H1 (cell line): ENCODE measurements at regions of chr1 and their contacts with region 1.

Region 1: GRCh38 chr1:115463363-115463746 is 125.3 kb upstream of the NGF start:
- DNase-seq: peak in 1 of 2 experiments; percentile 20
- H3K4me3 ChIP-seq: no peak overlapping the region
- H3K27ac ChIP-seq: no peak overlapping the region
- H3K4me1 ChIP-seq: no peaks in the 10 kb centered on the region
- H3K27me3 ChIP-seq: no peaks in the 10 kb centered on the region
- CTCF ChIP-seq: no peak
- EP300 ChIP-seq: no peak
- POLR2A ChIP-seq: no peak
- RAD21 ChIP-seq: peak; percentile 29 to 43; a peak in 3 of 4 replicates

Region 2: DNA sequence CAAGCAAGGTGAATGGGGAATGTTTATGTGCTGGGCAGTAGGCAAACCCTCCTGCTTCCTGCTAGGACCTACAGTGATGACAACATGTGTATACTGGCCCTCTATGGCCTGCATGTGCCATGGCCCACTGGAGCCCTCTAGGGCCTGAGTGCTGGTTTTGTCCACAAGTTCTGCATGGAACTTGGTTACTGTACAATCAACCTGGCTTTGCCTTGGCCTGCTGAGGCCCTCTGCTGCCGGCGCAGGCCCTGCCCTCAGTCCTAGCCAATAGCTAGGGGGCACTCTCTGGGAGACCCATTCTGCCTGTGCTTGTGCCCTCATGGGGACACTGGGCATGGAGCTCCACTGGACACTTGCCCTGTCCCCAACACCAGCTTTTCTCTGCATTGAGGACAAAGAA is 13.3 kb after region 1 on chr1:
- CTCF ChIA-PET with region 1: interaction called, 12 read pairs
- POLR2A ChIA-PET with region 1: no interaction called
- DNase-seq: no peak
- H3K4me3 ChIP-seq: no peak overlapping the region
- H3K27ac ChIP-seq: no peak overlapping the region
- H3K4me1 ChIP-seq: no peaks in the 10 kb centered on the region; a peak in 1 of 7 replicates
- H3K27me3 ChIP-seq: no peaks in the 10 kb centered on the region
- CTCF ChIP-seq: peak in 2 of 3 experiments; percentile 27; a peak in 2 of 4 replicates
- EP300 ChIP-seq: no peak
- POLR2A ChIP-seq: no peak
- RAD21 ChIP-seq: peak; percentile 33 to 48

Region 3: GRCh38 chr1:115530431-115530876 is 67.1 kb after region 1 on chr1:
- CTCF ChIA-PET with region 1: no interaction called
- POLR2A ChIA-PET with region 1: no interaction called
- DNase-seq: no peak
- H3K4me3 ChIP-seq: no peak overlapping the region
- H3K27ac ChIP-seq: no peak overlapping the region
- H3K4me1 ChIP-seq: peaks cover 0 to 6% (median 1%) of the 10 kb centered on the region in 4 experiments; a peak in 2 of 7 replicates
- H3K27me3 ChIP-seq: no peaks in the 10 kb centered on the region
- CTCF ChIP-seq: no peak
- EP300 ChIP-seq: no peak
- POLR2A ChIP-seq: no peak
- RAD21 ChIP-seq: no peak